ENCODE measurements at regions of chr10 and their contacts with region 1.

Region 1: DNA sequence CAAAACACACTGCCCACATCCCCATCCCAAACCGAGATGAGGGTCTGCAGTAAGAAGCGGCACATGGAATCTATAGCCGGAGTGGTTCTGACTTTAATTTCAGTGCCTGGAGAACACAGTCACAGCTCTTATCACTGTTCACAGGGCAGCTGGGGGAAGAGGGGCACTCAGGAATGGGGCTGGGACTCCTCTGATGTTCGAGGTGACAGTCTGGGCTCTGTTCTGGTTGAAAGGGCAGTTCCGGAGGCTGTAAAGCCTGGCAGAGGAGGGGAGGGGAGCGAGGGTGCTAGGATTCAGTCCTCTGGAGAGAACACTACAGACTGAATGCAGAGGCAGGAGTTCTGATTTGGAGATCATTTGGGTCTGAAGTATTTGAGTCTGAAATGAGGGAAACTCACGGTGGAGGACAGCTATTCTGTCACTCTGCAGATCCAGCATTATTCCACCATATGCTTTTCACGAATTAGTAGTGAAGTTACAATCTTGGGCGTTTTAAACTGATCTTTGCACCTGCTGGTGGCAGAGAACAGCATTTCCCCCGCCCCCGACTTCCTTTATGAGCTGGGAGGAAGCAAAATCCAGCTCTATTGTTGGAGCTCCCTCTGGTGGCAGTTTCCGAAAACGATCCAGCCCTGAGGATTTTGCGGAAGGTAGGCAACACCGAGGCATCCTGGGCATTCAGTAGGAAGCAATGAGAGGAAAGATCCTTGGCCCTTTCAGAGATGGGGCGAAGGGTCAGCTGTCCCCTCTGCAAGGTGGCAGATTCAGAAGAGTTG is 22.7 kb upstream of the KCNK18 start:
- DNase-seq: peak; percentile 81
- H3K4me3 ChIP-seq: peak overlapping the region in 1 of 3 experiments; percentile 16
- H3K27ac ChIP-seq: no peak overlapping the region
- H3K4me1 ChIP-seq: peaks cover 9% of the 10 kb centered on the region
- H3K27me3 ChIP-seq: peaks cover 27 to 32% of the 10 kb centered on the region in 2 experiments
- CTCF ChIP-seq: peak; percentile 83 to 88
- POLR2A ChIP-seq: no peak

Region 2: DNA sequence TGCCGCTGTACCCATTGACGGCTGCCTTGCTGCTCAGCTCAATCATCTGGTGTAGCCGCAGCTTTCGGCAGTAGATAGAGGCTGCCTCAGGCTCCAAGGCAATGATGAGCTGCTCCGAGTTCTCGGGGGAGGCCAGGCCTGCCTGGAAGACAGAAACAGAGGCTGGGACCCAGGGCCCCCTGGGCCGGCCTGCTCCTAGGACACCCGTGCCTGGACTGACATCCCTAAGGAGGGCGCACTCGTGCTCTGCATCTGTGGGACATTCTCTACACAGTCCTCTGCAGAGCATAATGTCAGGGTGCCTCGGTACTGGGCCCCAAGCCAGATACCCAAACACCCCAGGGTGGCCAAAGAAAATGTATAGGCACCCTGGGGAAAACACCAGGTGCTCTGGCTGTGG is 490.8 kb before region 1 on chr10:
- CTCF ChIA-PET with region 1: interaction called, 55 read pairs
- POLR2A ChIA-PET with region 1: no interaction called
- dilution Hi-C with region 1: no loop called
- intact Hi-C with region 1: loop called (anchors 1 kb)
- DNase-seq: no peak
- H3K4me3 ChIP-seq: no peak overlapping the region
- H3K27ac ChIP-seq: no peak overlapping the region
- H3K4me1 ChIP-seq: no peaks in the 10 kb centered on the region
- H3K27me3 ChIP-seq: no peaks in the 10 kb centered on the region
- CTCF ChIP-seq: no peak
- POLR2A ChIP-seq: no peak

Region 3: DNA sequence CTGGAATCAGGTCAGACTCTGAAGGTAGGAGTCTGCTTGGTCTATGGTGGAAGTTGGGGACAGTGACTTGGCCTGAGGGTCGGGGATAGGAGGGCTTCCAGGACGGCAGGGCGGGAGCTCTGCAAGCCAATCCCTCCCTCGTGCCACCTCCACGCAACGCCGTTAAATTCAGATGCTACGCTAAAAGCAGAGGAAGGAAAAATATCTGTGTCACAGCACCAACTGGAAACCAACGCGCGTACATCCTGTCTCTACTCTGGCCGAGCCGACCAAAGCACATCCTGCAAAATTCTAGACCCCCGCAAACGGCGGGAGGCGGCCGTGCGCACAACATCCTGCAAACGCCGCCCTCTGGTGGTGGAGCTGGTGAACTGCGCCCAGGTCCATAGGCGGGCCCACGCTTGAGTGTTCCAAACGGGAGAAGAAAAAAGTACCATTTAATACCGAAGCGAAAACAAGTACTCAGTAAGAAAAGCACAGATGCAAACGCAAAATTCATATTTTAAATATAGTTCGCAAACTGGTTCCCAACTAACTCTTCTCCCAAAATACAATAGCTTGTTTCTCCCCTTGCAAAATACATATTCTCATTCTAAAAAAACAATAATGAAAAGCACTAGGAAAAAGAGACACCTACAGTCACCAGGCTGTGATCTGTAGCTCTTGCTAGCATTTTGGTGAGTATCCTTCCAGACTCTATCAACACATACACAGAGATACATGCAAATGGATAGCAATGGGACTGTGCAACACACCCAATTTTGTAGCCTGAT is 386.5 kb before region 1 on chr10:
- CTCF ChIA-PET with region 1: interaction called, 98 read pairs
- POLR2A ChIA-PET with region 1: no interaction called
- dilution Hi-C with region 1: no loop called
- intact Hi-C with region 1: no loop called
- DNase-seq: peak; percentile 62
- H3K4me3 ChIP-seq: no peak overlapping the region
- H3K27ac ChIP-seq: no peak overlapping the region
- H3K4me1 ChIP-seq: no peaks in the 10 kb centered on the region
- H3K27me3 ChIP-seq: no peaks in the 10 kb centered on the region
- CTCF ChIP-seq: peak; percentile 94 to 97
- POLR2A ChIP-seq: no peak

Region 4: GRCh38 chr10:116815641-116816601 is 358.7 kb before region 1 on chr10:
- CTCF ChIA-PET with region 1: interaction called, 10 read pairs
- POLR2A ChIA-PET with region 1: no interaction called
- dilution Hi-C with region 1: loop called (anchors 25 kb)
- intact Hi-C with region 1: no loop called
- DNase-seq: no peak
- H3K4me3 ChIP-seq: no peak overlapping the region
- H3K27ac ChIP-seq: no peak overlapping the region
- H3K4me1 ChIP-seq: no peaks in the 10 kb centered on the region
- H3K27me3 ChIP-seq: no peaks in the 10 kb centered on the region
- CTCF ChIP-seq: no peak
- POLR2A ChIP-seq: no peak

Region 5: GRCh38 chr10:116947842-116948529 is 226.6 kb before region 1 on chr10:
- CTCF ChIA-PET with region 1: interaction called, 10 read pairs
- POLR2A ChIA-PET with region 1: no interaction called
- dilution Hi-C with region 1: no loop called
- intact Hi-C with region 1: loop called (anchors 5 kb)
- DNase-seq: peak; percentile 88
- H3K4me3 ChIP-seq: peak overlapping the region in 2 of 3 experiments; percentile 6 to 8
- H3K27ac ChIP-seq: peak overlapping the region; percentile 88
- H3K4me1 ChIP-seq: peaks cover 23% of the 10 kb centered on the region
- H3K27me3 ChIP-seq: no peaks in the 10 kb centered on the region
- CTCF ChIP-seq: no peak
- POLR2A ChIP-seq: no peak

Region 6: GRCh38 chr10:117137031-117137910 is 37.4 kb before region 1 on chr10:
- CTCF ChIA-PET with region 1: interaction called, 10 read pairs
- POLR2A ChIA-PET with region 1: no interaction called
- dilution Hi-C with region 1: no loop called
- intact Hi-C with region 1: no loop called
- DNase-seq: peak; percentile 22
- H3K4me3 ChIP-seq: peak overlapping the region in 2 of 3 experiments; percentile 15 to 26
- H3K27ac ChIP-seq: no peak overlapping the region
- H3K4me1 ChIP-seq: peaks cover 10% of the 10 kb centered on the region
- H3K27me3 ChIP-seq: peaks cover 73 to 94% of the 10 kb centered on the region in 2 experiments
- CTCF ChIP-seq: no peak
- POLR2A ChIP-seq: no peak

Region 7: GRCh38 chr10:117216611-117217195 is 42.1 kb after region 1 on chr10:
- CTCF ChIA-PET with region 1: interaction called, 17 read pairs
- POLR2A ChIA-PET with region 1: no interaction called
- dilution Hi-C with region 1: no loop called
- intact Hi-C with region 1: no loop called
- DNase-seq: peak; percentile 59
- H3K4me3 ChIP-seq: peak overlapping the region in 2 of 3 experiments; percentile 41 to 50
- H3K27ac ChIP-seq: no peak overlapping the region
- H3K4me1 ChIP-seq: peaks cover 5% of the 10 kb centered on the region
- H3K27me3 ChIP-seq: peaks cover 1 to 7% of the 10 kb centered on the region in 2 experiments
- CTCF ChIP-seq: peak; percentile 99 to 100
- POLR2A ChIP-seq: no peak